A549 (cell line): ENCODE measurements at regions of chr12 and their contacts with region 1.

Region 1: GRCh38 chr12:50763639-50764285 is at the start of gene ATF1:
- DNase-seq: peak; percentile 93 to 97
- ATAC-seq: peak; percentile 91 to 93
- H3K4me3 ChIP-seq: peak within 1 kb of the TSS; percentile 94
- H3K27ac ChIP-seq: peak within 1 kb of the TSS; percentile 96 to 100
- H3K4me1 ChIP-seq: peaks cover 24% of the 10 kb centered on the region
- CTCF ChIP-seq: no peak
- EP300 ChIP-seq: no peak
- POLR2A ChIP-seq: peak; percentile 97
- RAD21 ChIP-seq: no peak
- polyA plus RNA-seq, gene ATF1: 77.1 and 88.9 TPM in 2 replicates

Region 2: DNA sequence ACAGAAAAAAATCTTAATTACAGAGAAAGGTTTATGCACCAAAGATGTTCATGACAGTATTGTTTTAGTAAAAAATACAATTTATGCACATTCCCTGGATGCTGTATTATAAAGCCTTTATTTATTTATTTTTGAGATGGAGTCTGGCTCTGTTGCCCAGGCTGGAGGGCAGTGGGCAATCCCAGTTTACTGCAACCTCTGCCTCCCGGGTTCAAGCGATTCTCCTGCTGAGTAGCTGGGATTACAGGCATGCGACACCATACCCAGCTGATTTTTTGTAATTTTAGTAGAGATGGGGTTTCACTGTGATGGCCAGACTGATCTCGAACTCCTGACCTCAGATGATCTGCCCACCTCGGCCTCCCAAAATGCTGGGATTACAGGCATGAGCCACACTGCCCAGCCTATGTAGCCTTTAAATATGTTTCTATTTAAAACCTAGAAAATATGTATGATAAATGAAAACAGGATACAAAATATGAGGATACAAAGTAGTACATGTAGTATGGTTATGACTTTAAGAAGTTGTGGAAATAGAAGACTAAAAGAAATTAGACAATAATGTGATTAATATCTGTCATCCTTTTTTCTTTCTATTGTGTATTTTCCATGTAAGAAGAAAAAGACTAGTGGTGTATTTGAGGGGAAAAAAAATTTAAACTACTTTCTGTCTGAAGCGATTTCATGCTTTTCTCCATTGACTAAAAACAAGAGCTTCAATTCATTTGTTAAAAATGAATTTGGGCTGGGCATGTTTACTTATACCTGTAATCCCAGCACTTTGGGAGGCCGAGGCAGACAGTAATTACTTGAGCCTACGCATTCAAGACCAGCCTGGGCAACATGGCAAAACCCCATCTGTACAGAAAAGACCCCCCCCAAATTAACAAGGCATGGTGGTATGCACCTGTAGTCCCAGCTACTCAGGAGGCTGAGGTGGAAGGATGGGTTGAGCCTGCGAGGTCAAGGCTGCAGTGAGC is 13.3 kb after region 1 on chr12:
- CTCF ChIA-PET with region 1: interaction called, 32 read pairs
- POLR2A ChIA-PET with region 1: no interaction called
- DNase-seq: no peak
- ATAC-seq: no peak
- H3K4me3 ChIP-seq: no peak overlapping the region
- H3K27ac ChIP-seq: no peak overlapping the region
- H3K4me1 ChIP-seq: no peaks in the 10 kb centered on the region
- CTCF ChIP-seq: no peak
- EP300 ChIP-seq: no peak
- POLR2A ChIP-seq: no peak
- RAD21 ChIP-seq: no peak

Region 3: GRCh38 chr12:50786498-50787231 is 22.9 kb after region 1 on chr12:
- CTCF ChIA-PET with region 1: interaction called, 33 read pairs
- POLR2A ChIA-PET with region 1: interaction called, 14 read pairs
- DNase-seq: peak; percentile 84 to 99
- ATAC-seq: peak; percentile 97 to 98
- H3K4me3 ChIP-seq: no peak overlapping the region
- H3K27ac ChIP-seq: peak overlapping the region; percentile 70 to 85
- H3K4me1 ChIP-seq: peaks cover 52% of the 10 kb centered on the region
- CTCF ChIP-seq: no peak
- EP300 ChIP-seq: peak; percentile 66 to 80; a peak in 4 of 5 replicates
- POLR2A ChIP-seq: no peak
- RAD21 ChIP-seq: peak in 1 of 2 experiments; percentile 1; a peak in 2 of 5 replicates

Region 4: DNA sequence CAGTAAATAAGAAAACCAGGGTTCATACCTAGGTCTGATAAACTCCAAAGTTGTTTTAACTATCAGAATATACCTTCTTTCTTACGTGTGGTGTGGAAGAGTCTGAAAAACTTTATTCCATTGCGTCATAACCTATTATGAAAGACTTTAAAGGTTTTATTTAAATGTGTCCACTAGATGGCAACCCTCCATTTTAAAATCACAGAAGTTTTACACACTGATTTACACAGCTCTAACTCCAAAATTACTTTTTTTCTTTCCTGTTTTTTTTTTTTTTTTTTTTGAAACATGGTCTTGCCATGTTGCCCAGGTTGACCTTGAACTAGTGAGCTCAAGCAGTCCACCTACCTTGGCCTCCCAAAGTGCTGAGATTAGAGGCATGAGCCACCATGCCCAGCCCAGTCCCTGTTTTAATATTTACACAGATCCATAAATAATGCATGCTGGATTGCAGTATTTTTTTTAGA is 61.6 kb after region 1 on chr12:
- CTCF ChIA-PET with region 1: interaction called, 20 read pairs
- POLR2A ChIA-PET with region 1: interaction called, 3 read pairs
- DNase-seq: peak; percentile 25 to 72
- ATAC-seq: peak; percentile 72 to 75
- H3K4me3 ChIP-seq: no peak overlapping the region
- H3K27ac ChIP-seq: peak overlapping the region; percentile 2 to 59; a peak in 4 of 6 replicates
- H3K4me1 ChIP-seq: peaks cover 9% of the 10 kb centered on the region
- CTCF ChIP-seq: peak; percentile 85
- EP300 ChIP-seq: no peak
- POLR2A ChIP-seq: no peak
- RAD21 ChIP-seq: peak; percentile 74 to 76

Region 5: DNA sequence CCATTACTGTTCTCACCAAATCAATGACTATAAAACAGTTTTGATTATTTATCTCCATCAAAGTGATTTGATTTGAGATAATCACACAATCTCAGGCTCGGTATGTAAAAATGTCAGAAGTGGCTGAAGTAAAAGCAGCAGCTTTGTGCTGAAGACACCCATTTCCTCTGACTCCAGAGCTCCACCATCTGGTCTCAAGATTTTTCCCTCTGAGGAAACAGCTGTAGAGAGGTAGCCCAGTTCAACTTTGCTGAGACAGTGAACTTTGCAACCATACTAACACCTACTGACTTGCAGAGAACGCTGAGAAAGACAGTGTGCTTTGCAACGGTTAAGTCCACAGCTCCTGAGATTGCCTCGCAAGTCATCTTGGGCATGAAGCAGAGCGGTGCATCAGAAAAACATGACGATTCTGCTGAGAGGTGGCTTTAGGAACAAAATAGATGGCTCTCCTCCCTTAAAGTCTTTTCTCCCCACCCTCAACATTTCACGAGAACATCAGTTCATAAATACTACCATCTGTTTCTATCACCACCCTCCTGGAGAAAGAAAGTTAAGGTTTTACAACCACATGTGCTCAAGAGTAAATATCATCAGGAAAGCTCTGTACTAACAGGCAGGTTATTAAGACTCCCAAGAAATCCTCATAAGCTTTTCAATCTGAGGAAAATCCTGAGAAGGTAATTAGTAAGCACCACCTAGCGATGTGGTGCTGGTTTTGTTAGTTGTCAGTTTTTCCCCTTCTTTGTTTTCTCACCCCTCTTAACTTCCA is 223.4 kb after region 1 on chr12:
- CTCF ChIA-PET with region 1: interaction called, 109 read pairs
- POLR2A ChIA-PET with region 1: interaction called, 9 read pairs
- DNase-seq: peak in 1 of 2 experiments; percentile 60
- ATAC-seq: peak; percentile 87 to 92; a peak in 5 of 6 replicates
- H3K4me3 ChIP-seq: no peak overlapping the region
- H3K27ac ChIP-seq: no peak overlapping the region
- H3K4me1 ChIP-seq: no peaks in the 10 kb centered on the region
- CTCF ChIP-seq: peak; percentile 74
- EP300 ChIP-seq: no peak
- POLR2A ChIP-seq: no peak
- RAD21 ChIP-seq: peak; percentile 71 to 83

Region 6: DNA sequence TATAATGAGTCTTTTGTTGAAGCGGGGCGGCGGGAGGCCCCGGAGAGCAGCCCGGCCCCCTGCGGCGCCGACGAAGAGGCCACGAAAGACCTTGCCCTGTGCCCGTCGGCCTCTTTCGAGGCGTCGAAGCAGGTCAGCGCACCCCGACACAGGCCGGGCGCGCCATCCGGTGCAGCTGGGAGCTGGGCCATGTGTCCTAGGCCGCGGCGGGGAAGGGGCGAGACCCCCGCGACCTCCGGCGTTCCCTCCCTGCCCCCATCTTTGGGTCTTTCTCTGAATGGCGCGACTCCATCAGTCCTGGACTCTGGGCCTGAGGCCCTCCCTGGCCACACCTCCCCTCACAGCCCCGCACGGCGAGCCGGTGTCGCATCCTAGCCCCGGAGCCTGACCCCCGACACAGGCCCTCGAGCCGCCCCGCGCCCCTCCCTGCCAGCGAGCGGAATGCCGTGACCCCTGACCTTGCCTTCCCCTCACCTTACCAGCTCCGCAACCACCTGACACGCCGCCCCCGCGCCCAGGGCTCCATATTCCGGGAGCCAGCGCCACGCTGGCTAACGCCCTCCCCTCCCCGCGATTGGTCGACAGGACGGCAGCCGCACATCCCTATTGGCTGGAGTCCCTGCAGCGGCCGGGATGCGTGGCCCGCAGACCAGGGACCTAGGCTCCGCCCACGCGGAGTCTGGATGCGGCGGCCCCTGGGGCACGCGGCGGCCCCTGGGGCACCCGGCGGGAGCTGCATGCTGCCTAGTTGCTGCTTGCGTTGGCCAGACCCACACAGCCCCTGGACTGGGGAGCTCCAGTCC is 262.3 kb after region 1 on chr12 and contains the start of gene SLC11A2:
- CTCF ChIA-PET with region 1: interaction called, 19 read pairs
- POLR2A ChIA-PET with region 1: interaction called, 11 read pairs
- DNase-seq: peak; percentile 96 to 98
- ATAC-seq: peak; percentile 96 to 98
- H3K4me3 ChIP-seq: peak within 1 kb of the TSS; percentile 64
- H3K27ac ChIP-seq: peak within 1 kb of the TSS; percentile 84 to 93
- H3K4me1 ChIP-seq: peaks cover 36% of the 10 kb centered on the region
- CTCF ChIP-seq: no peak
- EP300 ChIP-seq: no peak
- POLR2A ChIP-seq: peak; percentile 92
- RAD21 ChIP-seq: no peak
- polyA plus RNA-seq, gene SLC11A2: 80.7 and 82.6 TPM in 2 replicates